Heart right ventricle (tissue), 16 donors: ENCODE measurements at regions of chrX and their contacts with region 1.

Region 1: DNA sequence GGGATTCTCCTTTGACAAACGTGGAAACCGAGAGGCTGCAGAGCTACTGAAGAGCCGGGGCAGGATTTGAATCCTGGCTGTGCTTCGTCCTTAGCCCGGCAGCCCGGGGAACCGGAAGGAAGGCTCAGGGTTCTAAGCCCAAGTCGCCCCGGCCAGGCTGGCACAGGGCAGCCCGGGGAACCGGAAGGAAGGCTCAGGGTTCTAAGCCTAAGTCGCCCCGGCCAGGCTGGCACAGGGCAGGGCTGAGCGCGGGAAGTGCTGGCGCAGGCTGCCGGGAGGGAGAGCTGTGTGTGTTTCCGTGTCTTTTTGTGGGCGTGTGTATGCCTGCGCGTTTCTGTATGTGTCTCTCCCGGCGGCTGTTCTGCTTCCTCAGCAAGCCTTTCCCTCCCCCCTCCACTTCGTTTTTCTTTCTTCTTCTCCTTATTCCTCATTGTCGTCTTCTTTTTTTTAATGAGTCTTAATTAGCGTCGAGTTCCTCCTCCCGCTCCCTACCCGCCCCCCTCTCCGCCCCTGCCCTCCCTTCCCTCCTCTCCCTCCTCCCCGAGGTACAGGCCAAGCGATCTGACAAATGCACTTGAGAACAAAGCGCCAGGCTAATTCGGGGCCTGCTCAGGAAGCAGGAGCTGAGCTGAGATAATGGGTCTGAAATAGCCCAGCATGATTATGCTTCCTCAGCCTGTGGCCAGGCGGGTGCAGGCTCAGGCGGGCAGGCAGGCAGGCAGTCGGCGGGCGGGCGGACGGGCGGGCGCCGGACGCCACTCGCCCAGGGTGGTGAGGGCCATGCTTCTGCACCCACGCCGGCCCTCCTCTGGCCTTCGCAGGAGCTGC is 65.9 kb downstream of the EFNB1 start:
- DNase-seq: peak; percentile 55 to 77
- ATAC-seq: peak; percentile 86 to 94 (median 91)
- H3K4me3 ChIP-seq: peak overlapping the region in 9 of 10 donors; percentile 6 to 41 (median 22)
- H3K27ac ChIP-seq: peak overlapping the region; percentile 88 to 93 (median 90)
- H3K4me1 ChIP-seq: peaks cover 11 to 53% (median 37%) of the 10 kb centered on the region in 9 donors
- H3K27me3 ChIP-seq: peaks cover 0 to 17% (median 0%) of the 10 kb centered on the region in 7 donors
- CTCF ChIP-seq: no peak

Region 2: DNA sequence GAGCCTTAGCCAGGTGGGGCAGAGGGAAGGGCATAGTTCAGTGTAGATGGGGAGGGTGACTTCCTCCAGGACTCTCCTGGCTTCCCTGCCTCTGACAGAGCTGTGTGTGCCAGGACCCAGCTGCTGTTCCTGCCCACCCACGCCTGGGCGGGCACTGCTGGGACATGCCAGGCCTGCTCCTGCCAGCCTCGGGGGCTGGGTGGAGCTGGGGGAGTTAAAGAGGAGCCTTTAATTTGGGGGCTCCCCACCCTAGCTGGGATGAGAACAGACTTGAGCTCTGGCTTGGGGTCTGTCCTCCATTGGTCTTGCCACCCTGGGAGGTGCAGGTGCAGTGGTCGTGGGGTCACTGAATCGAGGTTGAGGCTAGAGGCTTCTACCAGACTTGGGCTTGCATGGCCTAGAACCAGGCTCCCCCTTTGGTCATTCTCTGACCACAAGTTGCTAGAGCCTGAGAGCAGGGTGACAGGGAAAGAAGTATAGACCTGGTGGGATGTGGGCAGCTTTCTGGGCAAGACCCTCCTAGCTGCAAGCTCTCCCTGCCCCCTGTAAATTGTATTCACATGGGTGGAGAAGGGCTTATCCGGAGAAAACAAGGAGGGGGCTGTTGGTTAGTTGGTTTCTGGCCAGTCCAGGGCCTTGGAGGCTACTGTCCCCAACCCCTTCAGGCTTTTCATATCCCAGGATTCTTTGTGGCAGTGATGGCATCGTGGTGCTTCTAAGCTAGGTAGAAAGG is 60.2 kb before region 1 on chrX:
- intact Hi-C with region 1: loop called in 7 of 10 experiments (anchors 2 to 10 kb)
- DNase-seq: no peak
- ATAC-seq: no peak
- H3K4me3 ChIP-seq: peak overlapping the region in 1 of 10 donors; percentile 7
- H3K27ac ChIP-seq: no peak overlapping the region
- H3K4me1 ChIP-seq: peaks cover 0 to 51% (median 18%) of the 10 kb centered on the region in 9 donors
- H3K27me3 ChIP-seq: peaks cover 0 to 23% (median 0%) of the 10 kb centered on the region in 7 donors
- CTCF ChIP-seq: no peak

Region 3: DNA sequence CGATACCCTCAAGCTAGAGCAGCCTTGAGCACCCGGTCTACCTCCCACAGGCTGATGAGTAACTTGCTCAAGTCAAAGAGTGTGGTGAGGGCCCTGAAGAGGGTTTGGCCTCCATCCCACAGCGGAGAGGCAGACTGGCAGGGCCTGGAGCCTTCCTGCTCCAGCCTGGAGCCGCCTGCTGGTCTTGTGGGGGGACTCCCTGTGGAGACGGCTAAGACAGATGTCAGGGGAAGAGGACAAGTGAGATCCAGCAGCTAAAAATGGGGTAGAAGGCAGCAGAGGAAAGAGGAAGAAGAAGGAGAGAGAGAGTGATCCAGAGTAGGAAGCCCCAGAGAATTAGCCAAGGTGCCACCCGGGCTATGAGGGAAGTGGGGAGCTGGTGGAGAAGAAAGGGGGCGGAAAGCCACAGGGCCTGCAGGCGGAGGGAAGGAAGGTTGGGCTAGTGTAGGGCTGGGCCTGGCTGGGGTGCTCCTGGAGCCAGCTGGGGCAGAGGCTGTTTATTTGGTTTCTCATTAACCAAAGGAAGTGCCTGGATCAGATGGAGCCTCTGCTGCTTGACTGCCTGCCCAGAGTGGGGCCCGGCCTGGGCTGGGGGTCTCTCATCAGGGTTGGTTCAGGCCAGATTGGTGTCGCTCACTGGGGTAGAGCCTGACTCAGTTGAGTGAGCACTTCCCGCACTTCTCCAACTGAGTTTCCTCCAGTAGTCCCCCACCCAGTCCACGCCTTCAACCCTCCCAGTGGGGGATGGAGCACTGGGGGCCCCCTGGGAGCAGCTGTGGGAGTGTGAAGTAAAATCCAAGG is 51.7 kb before region 1 on chrX:
- intact Hi-C with region 1: loop called in 4 of 10 experiments (anchors 5 to 10 kb)
- DNase-seq: no peak
- ATAC-seq: peak in 4 of 8 donors; percentile 11 to 55 (median 33)
- H3K4me3 ChIP-seq: no peak overlapping the region
- H3K27ac ChIP-seq: peak overlapping the region in 2 of 10 donors; percentile 13 to 31
- H3K4me1 ChIP-seq: peaks cover 0 to 24% (median 15%) of the 10 kb centered on the region in 9 donors
- H3K27me3 ChIP-seq: no peaks in the 10 kb centered on the region
- CTCF ChIP-seq: no peak

Region 4: GRCh38 chrX:68915778-68916177 is 21.1 kb after region 1 on chrX:
- intact Hi-C with region 1: loop called in 1 of 10 experiments (anchors 2 kb)
- DNase-seq: no peak
- ATAC-seq: no peak
- H3K4me3 ChIP-seq: no peak overlapping the region
- H3K27ac ChIP-seq: no peak overlapping the region
- H3K4me1 ChIP-seq: peaks cover 0 to 12% (median 0%) of the 10 kb centered on the region in 9 donors
- H3K27me3 ChIP-seq: peaks cover 0 to 39% (median 0%) of the 10 kb centered on the region in 7 donors
- CTCF ChIP-seq: no peak

Region 5: DNA sequence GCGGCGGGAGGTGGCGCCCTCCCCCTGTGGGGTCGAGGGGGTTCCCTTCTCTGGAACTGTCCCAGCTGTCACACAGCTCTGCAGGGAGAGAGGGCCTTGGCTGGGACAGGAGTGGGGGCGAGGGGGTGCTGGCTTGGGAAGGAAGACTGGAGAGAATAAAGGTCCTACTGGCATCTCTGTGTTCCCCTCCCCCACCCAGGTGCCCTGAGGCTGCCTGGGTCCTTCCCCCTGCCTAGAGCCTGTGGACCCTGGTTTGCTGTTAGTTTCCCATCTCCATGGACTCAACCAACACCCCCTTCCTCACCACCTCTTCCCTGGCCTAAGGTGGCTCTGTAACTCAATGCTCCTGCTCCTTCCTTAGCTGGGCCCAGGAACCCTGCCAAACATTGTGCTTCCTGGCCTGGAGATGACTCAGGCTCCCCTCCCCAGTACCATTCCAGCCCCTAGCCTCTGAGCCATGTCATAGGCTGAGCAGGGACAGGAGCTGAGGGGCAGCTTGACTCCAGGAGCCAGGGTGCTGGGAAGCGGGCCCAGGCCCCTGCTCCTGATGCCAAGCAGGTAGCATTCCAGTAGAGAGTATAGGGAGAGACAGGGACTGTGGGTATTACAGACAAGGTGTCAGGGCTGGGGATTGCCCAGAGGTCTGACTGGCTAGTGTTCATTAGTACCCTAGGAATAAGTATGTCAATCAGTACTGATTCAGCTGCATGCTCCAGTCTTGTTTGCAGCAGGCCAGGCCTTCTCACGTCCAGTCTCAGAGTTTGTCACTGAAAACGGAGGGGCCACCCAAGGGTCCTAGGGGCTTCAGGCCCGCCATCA is 34.8 kb after region 1 on chrX:
- intact Hi-C with region 1: loop called in 3 of 10 experiments (anchors 5 kb)
- DNase-seq: peak; percentile 29 to 46
- ATAC-seq: peak in 7 of 8 donors; percentile 56 to 79 (median 74)
- H3K4me3 ChIP-seq: no peak overlapping the region
- H3K27ac ChIP-seq: peak overlapping the region in 9 of 10 donors; percentile 14 to 83 (median 60)
- H3K4me1 ChIP-seq: peaks cover 0 to 53% (median 20%) of the 10 kb centered on the region in 9 donors
- H3K27me3 ChIP-seq: peaks cover 0 to 7% (median 0%) of the 10 kb centered on the region in 7 donors
- CTCF ChIP-seq: no peak

Region 6: DNA sequence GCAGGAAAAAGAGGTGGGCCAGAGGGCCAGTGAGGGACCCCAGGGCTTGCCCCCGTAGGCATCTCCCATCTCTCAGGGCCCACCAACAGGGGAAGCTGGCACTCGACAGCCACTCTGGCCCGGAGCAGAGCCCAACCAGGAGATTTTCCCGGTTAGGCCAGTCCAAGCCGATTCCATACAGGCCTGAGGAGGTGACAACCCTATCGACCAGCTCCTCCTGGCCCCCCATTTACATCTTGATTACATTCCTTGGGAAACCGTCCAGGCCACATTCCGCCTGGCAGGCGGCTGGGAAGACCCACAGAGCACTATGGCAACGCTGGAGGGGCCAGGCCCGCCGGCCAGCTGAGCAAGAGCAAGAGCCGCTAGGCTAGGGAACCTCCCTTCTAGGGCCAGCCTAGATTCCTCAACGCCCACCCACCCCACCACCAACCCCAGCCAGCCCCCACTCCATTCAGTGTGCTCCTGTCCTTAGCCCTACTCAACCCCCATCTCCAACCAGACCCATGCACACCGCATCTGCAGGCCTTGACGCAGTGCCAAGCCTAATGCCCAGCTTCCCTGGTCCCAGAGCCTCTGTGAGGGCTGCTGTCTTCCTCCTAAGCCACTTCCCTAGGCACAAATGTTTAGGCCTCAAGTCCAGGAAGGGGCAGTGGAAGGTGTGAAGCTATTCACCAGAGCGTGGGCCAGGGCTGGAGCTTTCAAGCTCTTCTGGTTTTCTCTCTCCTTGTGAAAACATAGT is 95.3 kb after region 1 on chrX:
- intact Hi-C with region 1: loop called in 1 of 10 experiments (anchors 10 kb)
- DNase-seq: peak; percentile 25 to 51
- ATAC-seq: peak; percentile 74 to 94 (median 82)
- H3K4me3 ChIP-seq: no peak overlapping the region
- H3K27ac ChIP-seq: peak overlapping the region in 6 of 10 donors; percentile 7 to 48 (median 26)
- H3K4me1 ChIP-seq: peaks cover 0 to 31% (median 18%) of the 10 kb centered on the region in 9 donors
- H3K27me3 ChIP-seq: peaks cover 0 to 5% (median 0%) of the 10 kb centered on the region in 7 donors
- CTCF ChIP-seq: no peak